ENCODE measurements at regions of chr6 and their contacts with region 1.

Region 1: GRCh38 chr6:39347906-39348585 is 25.5 kb upstream of the KCNK16 start:
- DNase-seq: peak; percentile 76
- ATAC-seq: peak; percentile 80
- H3K4me3 Mint-ChIP-seq: no peak overlapping the region
- H3K27ac Mint-ChIP-seq: no peak overlapping the region
- H3K4me1 Mint-ChIP-seq: no peaks in the 10 kb centered on the region
- H3K27me3 Mint-ChIP-seq: peaks cover 3% of the 10 kb centered on the region

Region 2: DNA sequence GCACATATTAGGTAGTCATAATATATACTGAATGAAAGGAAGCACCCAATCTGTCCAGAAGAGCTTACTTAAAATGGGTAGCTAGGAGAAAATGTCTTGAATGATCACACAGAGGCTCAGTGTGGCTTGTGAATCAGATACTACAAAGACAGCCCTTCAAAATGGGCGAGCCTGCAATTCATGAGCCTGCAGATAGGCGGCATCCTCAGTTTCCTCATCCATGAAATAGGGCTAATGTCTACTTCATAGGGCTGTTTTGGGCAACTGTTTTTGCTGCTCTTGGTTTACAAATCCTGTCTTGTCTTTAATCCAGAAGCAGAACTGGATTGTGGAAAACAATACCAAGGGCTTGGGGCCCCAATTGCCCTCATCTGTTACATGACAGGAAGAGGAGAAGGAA is 103.8 kb after region 1 on chr6:
- CTCF ChIA-PET with region 1: no interaction called
- POLR2A ChIA-PET with region 1: no interaction called
- intact Hi-C with region 1: no loop called
- DNase-seq: peak; percentile 38
- ATAC-seq: peak; percentile 44
- H3K4me3 Mint-ChIP-seq: no peak overlapping the region
- H3K27ac Mint-ChIP-seq: no peak overlapping the region
- H3K4me1 Mint-ChIP-seq: peaks cover 10% of the 10 kb centered on the region
- H3K27me3 Mint-ChIP-seq: peaks cover 23% of the 10 kb centered on the region

Region 3: DNA sequence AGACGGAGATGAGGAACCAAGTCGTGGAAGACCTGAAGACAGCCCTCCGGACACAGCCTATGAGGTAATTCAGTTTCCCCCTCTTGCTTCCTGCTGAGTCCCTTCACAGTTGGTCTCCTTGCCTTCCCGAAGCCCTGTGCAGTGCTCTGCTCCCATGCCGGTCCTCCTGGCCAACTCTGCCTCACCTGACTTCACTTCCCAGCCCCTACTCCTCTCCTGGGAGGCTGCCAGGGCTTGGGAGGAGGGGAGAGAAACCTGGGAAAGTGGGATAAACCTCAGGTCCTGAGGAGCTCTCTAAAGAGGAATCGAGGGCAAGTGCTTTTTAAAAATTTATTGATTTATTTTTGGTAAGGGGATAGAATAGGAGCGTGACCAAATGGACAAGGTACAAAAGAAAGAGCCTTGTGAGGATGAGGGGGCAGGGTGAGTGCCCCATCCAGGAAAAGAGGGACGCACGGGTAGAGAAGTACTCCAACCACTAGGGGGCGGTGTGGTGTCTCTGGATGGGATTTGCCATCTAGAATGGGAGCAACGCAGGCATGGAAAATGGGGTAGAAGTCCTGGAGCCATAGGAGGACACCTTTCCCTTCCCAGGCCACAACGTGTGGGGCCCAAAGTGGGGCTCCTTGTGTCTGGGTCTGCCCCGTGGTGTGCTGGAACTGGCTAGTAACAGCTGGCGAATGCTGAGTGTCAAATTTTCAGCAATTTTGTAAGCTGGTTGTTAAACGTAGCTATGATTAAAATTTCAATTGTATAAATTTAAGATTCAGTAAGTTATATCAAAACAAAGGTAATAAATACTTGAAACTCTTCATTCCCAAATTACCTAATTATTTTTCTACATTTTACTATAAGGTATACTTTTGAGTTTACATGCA is 517.2 kb after region 1 on chr6:
- CTCF ChIA-PET with region 1: interaction called, 4 read pairs
- POLR2A ChIA-PET with region 1: no interaction called
- intact Hi-C with region 1: loop called in 1 of 2 experiments (anchors 10 kb)
- DNase-seq: peak; percentile 83
- ATAC-seq: peak; percentile 44
- H3K4me3 Mint-ChIP-seq: no peak overlapping the region
- H3K27ac Mint-ChIP-seq: no peak overlapping the region
- H3K4me1 Mint-ChIP-seq: no peaks in the 10 kb centered on the region
- H3K27me3 Mint-ChIP-seq: peaks cover 4% of the 10 kb centered on the region

Region 4: DNA sequence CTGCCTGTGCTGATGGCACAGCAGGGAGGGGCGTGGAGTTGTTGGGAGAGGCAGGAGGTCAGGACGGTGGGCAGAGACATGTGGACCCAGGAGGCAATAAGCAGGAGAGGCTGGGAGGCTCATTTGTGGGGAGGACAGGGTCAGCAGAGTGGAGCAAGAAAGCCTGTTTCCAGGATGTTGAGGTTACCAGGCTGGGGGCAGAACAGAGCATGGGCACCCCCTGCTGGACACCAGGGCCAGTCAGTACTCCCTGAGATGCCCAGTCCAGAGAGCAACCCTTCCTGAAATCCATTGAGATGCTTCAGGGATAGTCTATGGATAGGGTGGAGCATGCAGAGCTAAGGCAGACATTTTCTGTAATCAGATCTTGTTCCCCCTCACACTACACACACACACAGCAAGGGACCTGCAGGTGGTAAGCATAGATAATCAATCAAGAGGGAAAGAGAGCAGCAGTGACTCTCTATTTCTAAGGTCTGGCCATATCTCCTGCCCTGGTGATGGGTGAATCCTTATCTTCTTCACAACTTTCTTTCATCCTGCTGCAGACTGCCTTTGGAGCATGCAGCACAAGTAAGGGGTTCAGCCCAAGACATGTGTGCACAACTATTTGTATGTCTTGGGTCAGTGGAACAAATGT is 544.6 kb after region 1 on chr6:
- CTCF ChIA-PET with region 1: interaction called, 3 read pairs
- POLR2A ChIA-PET with region 1: no interaction called
- intact Hi-C with region 1: loop called (anchors 1 to 10 kb)
- DNase-seq: peak; percentile 53
- ATAC-seq: no peak
- H3K4me3 Mint-ChIP-seq: no peak overlapping the region
- H3K27ac Mint-ChIP-seq: no peak overlapping the region
- H3K4me1 Mint-ChIP-seq: no peaks in the 10 kb centered on the region
- H3K27me3 Mint-ChIP-seq: peaks cover 5% of the 10 kb centered on the region

Measured in activated CD4-positive, alpha-beta T cell treated with anti-CD3 and anti-CD28 coated beads for 36 hours (primary cell).